ENCODE measurements at regions of chr17 and their contacts with region 1.

Region 1: GRCh38 chr17:29807520-29808351 is 122.3 kb downstream of the SSH2 start:
- DNase-seq: peak; percentile 72
- H3K4me3 Mint-ChIP-seq: no peak overlapping the region
- H3K27ac Mint-ChIP-seq: no peak overlapping the region
- H3K4me1 Mint-ChIP-seq: peaks cover 20% of the 10 kb centered on the region
- H3K27me3 Mint-ChIP-seq: no peaks in the 10 kb centered on the region

Region 2: GRCh38 chr17:29640413-29640812 is 167.3 kb before region 1 on chr17:
- CTCF ChIA-PET with region 1: interaction called, 21 read pairs
- POLR2A ChIA-PET with region 1: interaction called, 3 read pairs
- intact Hi-C with region 1: no loop called
- DNase-seq: no peak
- H3K4me3 Mint-ChIP-seq: no peak overlapping the region
- H3K27ac Mint-ChIP-seq: peak overlapping the region; percentile 3
- H3K4me1 Mint-ChIP-seq: peaks cover 27% of the 10 kb centered on the region
- H3K27me3 Mint-ChIP-seq: no peaks in the 10 kb centered on the region

Region 3: DNA sequence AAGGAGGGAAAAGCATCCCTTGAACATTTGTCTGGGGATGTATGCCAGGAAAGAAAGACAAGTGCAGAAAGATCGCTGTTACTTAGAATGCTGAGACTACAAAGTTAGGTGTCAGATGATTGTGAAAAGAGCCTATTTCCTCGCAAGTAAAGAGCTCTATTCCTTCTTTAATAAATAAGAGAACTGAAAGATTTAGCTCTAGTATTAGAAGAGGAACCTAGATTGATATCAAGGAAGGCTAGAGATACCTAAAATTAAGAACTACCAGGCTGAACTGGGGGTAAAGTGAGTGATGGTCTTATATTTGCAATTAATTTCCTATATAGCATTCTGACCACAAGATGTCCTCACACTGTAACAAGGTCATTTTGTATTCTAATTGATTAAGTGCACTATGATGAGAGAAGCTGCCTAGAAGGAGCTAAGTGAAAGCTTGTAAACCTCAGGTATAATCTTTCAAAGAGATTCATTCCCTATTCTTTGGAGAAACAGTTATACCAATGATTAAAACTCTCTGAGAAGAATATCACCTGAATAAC is 60.0 kb after region 1 on chr17:
- CTCF ChIA-PET with region 1: interaction called, 13 read pairs
- POLR2A ChIA-PET with region 1: no interaction called
- intact Hi-C with region 1: no loop called
- DNase-seq: no peak
- H3K4me3 Mint-ChIP-seq: no peak overlapping the region
- H3K27ac Mint-ChIP-seq: no peak overlapping the region
- H3K4me1 Mint-ChIP-seq: peaks cover 2% of the 10 kb centered on the region
- H3K27me3 Mint-ChIP-seq: no peaks in the 10 kb centered on the region

Region 4: GRCh38 chr17:30000001-30000754 is 192.4 kb after region 1 on chr17:
- CTCF ChIA-PET with region 1: interaction called, 4 read pairs
- POLR2A ChIA-PET with region 1: no interaction called
- intact Hi-C with region 1: loop called (anchors 5 kb)
- DNase-seq: no peak
- H3K4me3 Mint-ChIP-seq: no peak overlapping the region
- H3K27ac Mint-ChIP-seq: no peak overlapping the region
- H3K4me1 Mint-ChIP-seq: peaks cover 12% of the 10 kb centered on the region
- H3K27me3 Mint-ChIP-seq: no peaks in the 10 kb centered on the region

Region 5: GRCh38 chr17:30093463-30094147 is 285.9 kb after region 1 on chr17:
- CTCF ChIA-PET with region 1: interaction called, 12 read pairs
- POLR2A ChIA-PET with region 1: no interaction called
- intact Hi-C with region 1: loop called (anchors 10 kb)
- DNase-seq: peak; percentile 46
- H3K4me3 Mint-ChIP-seq: no peak overlapping the region
- H3K27ac Mint-ChIP-seq: no peak overlapping the region
- H3K4me1 Mint-ChIP-seq: peaks cover 4% of the 10 kb centered on the region
- H3K27me3 Mint-ChIP-seq: peaks cover 13% of the 10 kb centered on the region